HepG2 (cell line): ENCODE measurements at regions of chr11 and their contacts with region 1.

Region 1: DNA sequence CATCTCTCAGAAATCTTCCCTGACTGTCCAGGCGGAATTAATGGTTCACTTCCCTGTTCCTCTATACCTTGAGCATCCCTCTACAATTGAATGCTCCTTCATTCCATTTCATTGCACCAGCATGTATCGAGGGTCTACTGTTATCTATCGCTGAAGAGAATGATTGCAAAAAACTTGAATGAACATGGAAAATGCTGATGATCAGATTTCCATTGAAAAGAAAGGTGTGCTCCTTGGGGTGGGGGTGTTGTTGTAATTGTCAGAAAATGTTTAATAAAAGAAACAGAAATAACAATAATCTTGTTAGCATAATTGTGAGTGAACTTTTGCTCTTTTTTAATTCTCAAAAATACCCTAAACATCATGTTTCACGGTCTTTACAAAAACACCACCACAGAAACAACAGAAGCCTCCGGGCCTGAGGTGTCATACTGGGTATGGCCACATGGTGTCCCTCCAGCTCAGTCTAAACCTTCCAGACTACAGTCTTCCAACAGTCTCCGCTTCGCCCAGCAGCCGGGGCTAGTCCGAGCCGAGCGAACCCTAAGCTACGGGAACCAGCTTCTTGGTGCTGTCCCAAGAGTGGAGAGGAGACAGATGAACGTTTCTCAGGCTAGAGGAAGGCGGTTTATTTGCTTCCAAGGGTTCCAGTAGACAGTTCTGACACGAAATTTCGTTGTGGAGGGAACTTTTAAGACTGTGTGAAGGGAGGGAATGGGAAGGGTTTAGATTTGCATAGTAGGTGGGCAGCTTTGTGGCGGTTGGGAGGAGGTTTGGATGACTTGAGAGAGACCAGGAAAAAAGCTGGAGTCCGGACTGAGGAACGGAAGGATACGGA is 75.8 kb upstream of the ZBED5 start:
- DNase-seq: peak; percentile 62
- ATAC-seq: peak; percentile 91
- H3K4me3 ChIP-seq: peak overlapping the region in 2 of 3 experiments; percentile 23 to 36; a peak in 2 of 6 replicates
- H3K27ac ChIP-seq: no peak overlapping the region
- H3K4me1 ChIP-seq: peaks cover 19% of the 10 kb centered on the region
- H3K27me3 ChIP-seq: peaks cover 2 to 55% of the 10 kb centered on the region in 2 experiments; a peak in 4 of 5 replicates
- CTCF ChIP-seq: peak; percentile 90
- EP300 ChIP-seq: no peak
- POLR2A ChIP-seq: no peak
- RAD21 ChIP-seq: peak; percentile 79

Region 2: DNA sequence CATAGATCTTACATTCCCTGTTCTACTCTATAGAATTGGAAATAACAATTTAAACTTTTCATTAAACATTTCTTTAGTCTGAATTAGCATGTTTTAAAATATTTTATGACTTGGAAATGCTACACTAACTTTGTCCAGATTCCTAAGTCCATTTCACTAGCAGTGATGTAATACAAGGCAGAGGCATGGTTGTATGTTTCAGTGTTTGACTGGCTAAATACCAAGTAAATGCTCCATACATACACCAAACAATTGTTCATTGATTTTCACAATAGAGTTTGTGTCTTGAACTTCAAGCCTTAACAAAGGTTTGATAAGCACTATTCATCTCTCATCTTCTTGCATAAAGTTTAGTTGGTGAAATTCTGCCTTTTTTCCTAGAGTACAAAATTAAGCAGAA is 89.3 kb before region 1 on chr11:
- CTCF ChIA-PET with region 1: no interaction called
- POLR2A ChIA-PET with region 1: no interaction called
- in situ Hi-C with region 1: no loop called
- intact Hi-C with region 1: no loop called
- DNase-seq: no peak
- ATAC-seq: no peak
- H3K4me3 ChIP-seq: no peak overlapping the region
- H3K27ac ChIP-seq: no peak overlapping the region
- H3K4me1 ChIP-seq: no peaks in the 10 kb centered on the region
- H3K27me3 ChIP-seq: no peaks in the 10 kb centered on the region
- CTCF ChIP-seq: no peak
- EP300 ChIP-seq: no peak
- POLR2A ChIP-seq: no peak
- RAD21 ChIP-seq: no peak

Region 3: DNA sequence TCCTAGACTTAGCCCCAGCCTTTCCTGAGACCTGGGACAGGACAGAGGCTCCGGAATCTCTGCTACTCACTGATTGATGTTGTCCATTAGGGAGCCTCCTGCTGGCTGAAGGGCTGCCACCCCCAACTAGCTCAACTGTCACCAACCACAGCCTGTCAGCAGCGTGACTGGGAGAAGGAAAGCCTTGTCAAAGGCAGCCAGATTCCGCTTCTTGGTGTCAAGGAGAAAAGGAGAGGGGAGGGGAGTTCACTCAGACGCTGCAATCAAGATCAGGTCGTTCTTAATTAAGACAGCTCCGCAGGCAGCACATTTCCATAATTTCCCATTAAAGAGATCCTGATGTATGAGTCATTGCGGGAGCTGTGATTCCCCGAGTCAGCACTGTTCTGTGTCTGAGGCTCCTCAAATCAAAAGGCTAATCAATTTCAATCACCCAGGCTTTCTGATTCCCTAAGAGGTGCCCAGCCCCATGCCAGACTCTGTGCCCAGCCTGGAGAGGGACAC is 77.0 kb after region 1 on chr11:
- CTCF ChIA-PET with region 1: interaction called, 5 read pairs
- POLR2A ChIA-PET with region 1: no interaction called
- in situ Hi-C with region 1: no loop called
- intact Hi-C with region 1: loop called (anchors 1 kb)
- DNase-seq: peak; percentile 16
- ATAC-seq: peak; percentile 91
- H3K4me3 ChIP-seq: no peak overlapping the region
- H3K27ac ChIP-seq: no peak overlapping the region
- H3K4me1 ChIP-seq: no peaks in the 10 kb centered on the region
- H3K27me3 ChIP-seq: peaks cover 1 to 4% of the 10 kb centered on the region in 2 experiments; a peak in 1 of 5 replicates
- CTCF ChIP-seq: peak; percentile 53
- EP300 ChIP-seq: no peak
- POLR2A ChIP-seq: no peak
- RAD21 ChIP-seq: no peak

Region 4: DNA sequence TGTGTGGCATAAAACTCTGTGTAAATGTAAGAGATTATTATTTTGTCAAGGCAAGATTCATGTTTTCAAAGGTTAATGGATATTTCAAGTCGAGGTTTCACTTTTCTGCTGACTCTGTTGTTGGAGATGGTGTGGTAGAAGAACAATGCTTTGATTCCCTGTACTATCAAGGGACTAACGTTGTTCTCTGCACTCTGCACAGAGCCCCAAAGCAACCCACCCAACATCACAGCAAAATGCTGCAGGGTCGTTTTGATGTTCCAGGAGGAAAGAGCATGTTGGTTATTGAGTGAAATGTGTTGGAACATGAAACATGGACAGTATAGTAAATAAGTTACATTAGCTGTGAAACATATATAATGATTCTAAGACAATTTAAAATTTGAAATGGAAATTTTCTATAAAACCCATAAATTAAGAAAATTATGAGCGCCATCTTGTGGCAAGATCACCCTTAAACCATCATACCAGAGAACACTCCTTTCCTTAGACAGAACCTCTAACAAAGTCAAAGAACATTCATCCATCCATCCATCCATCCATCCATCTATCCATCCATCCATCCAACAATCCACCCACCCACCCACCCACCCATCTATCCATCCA is 88.6 kb after region 1 on chr11:
- CTCF ChIA-PET with region 1: interaction called, 21 read pairs
- POLR2A ChIA-PET with region 1: no interaction called
- in situ Hi-C with region 1: loop called (anchors 5 kb)
- intact Hi-C with region 1: loop called (anchors 5 kb)
- DNase-seq: no peak
- ATAC-seq: no peak
- H3K4me3 ChIP-seq: no peak overlapping the region
- H3K27ac ChIP-seq: no peak overlapping the region
- H3K4me1 ChIP-seq: no peaks in the 10 kb centered on the region
- H3K27me3 ChIP-seq: 0 out of 5 replicates have a peak, but pooled peaks cover 0 to 3% of the 10 kb centered on the region in 2 experiments
- CTCF ChIP-seq: 0 out of 2 replicates have a peak, but pooled peaks have one; percentile 27
- EP300 ChIP-seq: no peak
- POLR2A ChIP-seq: no peak
- RAD21 ChIP-seq: no peak

Region 5: DNA sequence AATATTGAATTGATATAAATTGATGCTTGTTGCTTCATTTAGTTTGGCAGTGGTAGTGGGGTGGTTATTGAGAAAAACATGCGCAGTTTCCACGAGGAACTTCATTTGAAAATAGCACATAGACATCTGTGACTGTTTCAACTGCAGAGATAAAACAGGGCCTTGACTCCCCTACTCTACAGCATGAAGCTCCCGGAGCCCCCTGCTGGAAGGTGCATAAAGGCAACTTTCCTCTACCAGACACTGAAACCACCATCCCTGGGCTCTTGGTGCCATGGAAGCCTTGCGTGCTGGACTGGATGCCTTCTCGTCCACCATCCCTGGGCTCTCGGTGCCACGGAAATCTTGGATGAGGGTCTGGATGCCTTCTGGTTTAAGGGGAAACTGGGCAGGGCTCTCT is 223.5 kb after region 1 on chr11:
- CTCF ChIA-PET with region 1: no interaction called
- POLR2A ChIA-PET with region 1: no interaction called
- in situ Hi-C with region 1: no loop called
- intact Hi-C with region 1: loop called (anchors 1 kb)
- DNase-seq: peak; percentile 33
- ATAC-seq: peak; percentile 91
- H3K4me3 ChIP-seq: no peak overlapping the region
- H3K27ac ChIP-seq: no peak overlapping the region
- H3K4me1 ChIP-seq: no peaks in the 10 kb centered on the region
- H3K27me3 ChIP-seq: no peaks in the 10 kb centered on the region; a peak in 1 of 5 replicates
- CTCF ChIP-seq: peak; percentile 55
- EP300 ChIP-seq: no peak
- POLR2A ChIP-seq: no peak
- RAD21 ChIP-seq: 0 out of 2 replicates have a peak, but pooled peaks have one; percentile 12